OCI-LY7 (cell line): ENCODE measurements at regions of chr11 and their contacts with region 1.

Region 1: GRCh38 chr11:13928566-13929251 is 33.8 kb upstream of the SPON1 start:
- DNase-seq: peak; percentile 84
- H3K4me3 ChIP-seq: no peak overlapping the region
- H3K27ac ChIP-seq: peak overlapping the region; percentile 40
- H3K4me1 ChIP-seq: peaks cover 77% of the 10 kb centered on the region
- CTCF ChIP-seq: no peak

Region 2: GRCh38 chr11:13620063-13620462 is 308.6 kb before region 1 on chr11:
- CTCF ChIA-PET with region 1: no interaction called
- POLR2A ChIA-PET with region 1: no interaction called
- intact Hi-C with region 1: no loop called
- DNase-seq: no peak
- H3K4me3 ChIP-seq: no peak overlapping the region
- H3K27ac ChIP-seq: no peak overlapping the region
- H3K4me1 ChIP-seq: no peaks in the 10 kb centered on the region
- CTCF ChIP-seq: no peak

Region 3: GRCh38 chr11:13668102-13668956 is 260.4 kb before region 1 on chr11 and contains the start of gene FAR1:
- CTCF ChIA-PET with region 1: no interaction called
- POLR2A ChIA-PET with region 1: interaction called, 3 read pairs
- intact Hi-C with region 1: loop called (anchors 10 kb)
- DNase-seq: peak; percentile 98
- H3K4me3 ChIP-seq: peak within 1 kb of the TSS; percentile 93
- H3K27ac ChIP-seq: peak within 1 kb of the TSS; percentile 52
- H3K4me1 ChIP-seq: peaks cover 44% of the 10 kb centered on the region
- CTCF ChIP-seq: peak; percentile 74
- total RNA-seq, gene FAR1: 52.1 and 61.2 TPM in 2 replicates

Region 4: GRCh38 chr11:13861411-13861810 is 67.3 kb before region 1 on chr11:
- CTCF ChIA-PET with region 1: interaction called, 3 read pairs
- POLR2A ChIA-PET with region 1: interaction called, 14 read pairs
- intact Hi-C with region 1: loop called (anchors 1 kb)
- DNase-seq: peak; percentile 97
- H3K4me3 ChIP-seq: peak overlapping the region; percentile 35
- H3K27ac ChIP-seq: peak overlapping the region; percentile 89
- H3K4me1 ChIP-seq: peaks cover 77% of the 10 kb centered on the region
- CTCF ChIP-seq: no peak

Region 5: GRCh38 chr11:13883042-13883441 is 45.7 kb before region 1 on chr11:
- CTCF ChIA-PET with region 1: interaction called, 4 read pairs
- POLR2A ChIA-PET with region 1: interaction called, 14 read pairs
- intact Hi-C with region 1: no loop called
- DNase-seq: peak; percentile 88
- H3K4me3 ChIP-seq: no peak overlapping the region
- H3K27ac ChIP-seq: no peak overlapping the region
- H3K4me1 ChIP-seq: peaks cover 45% of the 10 kb centered on the region
- CTCF ChIP-seq: no peak

Region 6: GRCh38 chr11:13896175-13896980 is 32.3 kb before region 1 on chr11:
- CTCF ChIA-PET with region 1: no interaction called
- POLR2A ChIA-PET with region 1: interaction called, 19 read pairs
- intact Hi-C with region 1: loop called (anchors 1 kb)
- DNase-seq: no peak
- H3K4me3 ChIP-seq: no peak overlapping the region
- H3K27ac ChIP-seq: peak overlapping the region; percentile 92
- H3K4me1 ChIP-seq: peaks cover 70% of the 10 kb centered on the region
- CTCF ChIP-seq: no peak

Region 7: GRCh38 chr11:13907678-13908077 is 21.0 kb before region 1 on chr11:
- CTCF ChIA-PET with region 1: interaction called, 4 read pairs
- POLR2A ChIA-PET with region 1: interaction called, 27 read pairs
- intact Hi-C with region 1: no loop called
- DNase-seq: no peak
- H3K4me3 ChIP-seq: no peak overlapping the region
- H3K27ac ChIP-seq: no peak overlapping the region
- H3K4me1 ChIP-seq: no peaks in the 10 kb centered on the region
- CTCF ChIP-seq: no peak

Region 8: GRCh38 chr11:13917264-13917663 is 11.4 kb before region 1 on chr11:
- CTCF ChIA-PET with region 1: no interaction called
- POLR2A ChIA-PET with region 1: interaction called, 10 read pairs
- intact Hi-C with region 1: no loop called
- DNase-seq: no peak
- H3K4me3 ChIP-seq: no peak overlapping the region
- H3K27ac ChIP-seq: no peak overlapping the region
- H3K4me1 ChIP-seq: peaks cover 36% of the 10 kb centered on the region
- CTCF ChIP-seq: no peak

Region 9: DNA sequence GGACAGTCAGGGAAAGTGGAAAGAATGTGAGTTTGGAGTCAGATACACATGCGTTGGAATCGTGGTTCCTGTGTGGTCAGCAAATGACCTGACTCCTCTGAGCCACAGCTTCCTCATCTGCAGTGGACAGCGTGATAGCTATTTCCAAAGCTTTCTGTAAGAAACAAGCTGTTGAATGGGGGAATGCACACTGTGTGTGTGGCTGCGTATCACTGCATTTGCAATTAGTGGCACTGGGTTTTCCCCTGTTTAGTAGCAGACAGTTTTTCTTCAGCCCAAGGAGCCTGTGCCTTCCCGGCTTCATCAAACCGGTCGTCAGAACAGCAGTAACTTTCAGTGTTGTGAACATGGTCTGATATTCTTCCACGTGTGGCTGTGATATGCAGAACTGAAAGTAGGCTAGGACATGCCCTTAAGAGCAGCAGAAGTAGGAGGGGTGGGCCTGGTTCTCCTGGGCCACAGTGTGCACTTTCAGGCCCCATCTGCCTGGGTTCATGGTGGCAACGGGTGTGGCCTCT is 308.8 kb after region 1 on chr11:
- CTCF ChIA-PET with region 1: no interaction called
- POLR2A ChIA-PET with region 1: no interaction called
- intact Hi-C with region 1: no loop called
- DNase-seq: peak; percentile 86
- H3K4me3 ChIP-seq: no peak overlapping the region
- H3K27ac ChIP-seq: peak overlapping the region; percentile 49
- H3K4me1 ChIP-seq: peaks cover 22% of the 10 kb centered on the region
- CTCF ChIP-seq: no peak